ENCODE measurements at regions of chr20 and their contacts with region 1.

Region 1: GRCh38 chr20:38073307-38074071 is 39.9 kb downstream of the RPRD1B start:
- DNase-seq: peak; percentile 52
- H3K4me3 ChIP-seq: no peak overlapping the region; a peak in 1 of 4 replicates
- H3K27ac ChIP-seq: peak overlapping the region; percentile 36 to 78
- H3K4me1 ChIP-seq: peaks cover 10 to 22% of the 10 kb centered on the region in 2 experiments; a peak in 3 of 4 replicates
- H3K27me3 ChIP-seq: no peaks in the 10 kb centered on the region
- CTCF ChIP-seq: peak; percentile 81
- EP300 ChIP-seq: no peak
- RAD21 ChIP-seq: peak; percentile 70

Region 2: GRCh38 chr20:37822141-37822601 is 251.3 kb before region 1 on chr20:
- CTCF ChIA-PET with region 1: no interaction called
- POLR2A ChIA-PET with region 1: no interaction called
- DNase-seq: no peak
- H3K4me3 ChIP-seq: peak overlapping the region; percentile 6 to 12; a peak in 2 of 4 replicates
- H3K27ac ChIP-seq: peak overlapping the region; percentile 79 to 89
- H3K4me1 ChIP-seq: peaks cover 9 to 13% of the 10 kb centered on the region in 2 experiments; a peak in 3 of 4 replicates
- H3K27me3 ChIP-seq: no peaks in the 10 kb centered on the region
- CTCF ChIP-seq: no peak
- EP300 ChIP-seq: no peak; a peak in 1 of 4 replicates
- RAD21 ChIP-seq: no peak

Region 3: DNA sequence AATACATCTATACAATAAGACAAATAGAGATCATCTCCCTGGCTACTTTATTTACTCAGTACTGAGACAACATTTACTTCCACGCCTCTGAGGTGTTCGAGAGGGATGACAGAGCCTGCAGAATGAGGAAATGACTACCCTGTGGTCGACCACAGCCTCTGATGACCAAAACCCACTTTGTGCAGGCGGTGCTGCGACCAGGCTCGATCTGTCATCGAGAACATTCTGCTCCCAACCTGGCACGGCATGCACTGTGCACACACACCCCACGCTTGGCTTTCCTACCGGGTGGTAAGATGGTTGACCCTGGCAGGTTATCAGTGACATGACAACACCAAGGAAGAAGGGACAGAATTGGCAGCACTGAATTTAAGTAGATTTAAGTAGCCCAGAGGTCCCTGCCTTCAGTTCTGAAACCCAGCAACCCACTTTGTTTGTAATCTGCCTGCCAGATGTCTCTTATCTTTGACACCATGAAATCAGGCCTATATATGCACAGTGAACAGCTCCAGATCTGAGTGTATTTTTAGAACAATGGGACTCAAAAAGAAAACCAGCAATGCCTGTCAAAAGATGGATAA is 82.8 kb before region 1 on chr20:
- CTCF ChIA-PET with region 1: no interaction called
- POLR2A ChIA-PET with region 1: no interaction called
- DNase-seq: peak; percentile 67
- H3K4me3 ChIP-seq: no peak overlapping the region
- H3K27ac ChIP-seq: peak overlapping the region in 1 of 2 experiments; percentile 91; a peak in 2 of 4 replicates
- H3K4me1 ChIP-seq: peaks cover 4 to 72% of the 10 kb centered on the region in 2 experiments; a peak in 3 of 4 replicates
- H3K27me3 ChIP-seq: no peaks in the 10 kb centered on the region
- CTCF ChIP-seq: no peak
- EP300 ChIP-seq: peak in 1 of 2 experiments; percentile 92; a peak in 2 of 4 replicates
- RAD21 ChIP-seq: no peak

Region 4: GRCh38 chr20:38050686-38051085 is 22.8 kb before region 1 on chr20:
- CTCF ChIA-PET with region 1: interaction called, 12 read pairs
- POLR2A ChIA-PET with region 1: no interaction called
- DNase-seq: no peak
- H3K4me3 ChIP-seq: no peak overlapping the region
- H3K27ac ChIP-seq: peak overlapping the region; percentile 47 to 61; a peak in 3 of 4 replicates
- H3K4me1 ChIP-seq: peaks cover 0 to 13% of the 10 kb centered on the region in 2 experiments; a peak in 3 of 4 replicates
- H3K27me3 ChIP-seq: no peaks in the 10 kb centered on the region
- CTCF ChIP-seq: no peak
- EP300 ChIP-seq: no peak
- RAD21 ChIP-seq: no peak

Region 5: GRCh38 chr20:38113401-38114325 is 40.2 kb after region 1 on chr20:
- CTCF ChIA-PET with region 1: interaction called, 16 read pairs
- POLR2A ChIA-PET with region 1: no interaction called
- DNase-seq: no peak
- H3K4me3 ChIP-seq: no peak overlapping the region
- H3K27ac ChIP-seq: peak overlapping the region; percentile 58 to 65
- H3K4me1 ChIP-seq: peaks cover 38 to 42% of the 10 kb centered on the region in 2 experiments
- H3K27me3 ChIP-seq: no peaks in the 10 kb centered on the region
- CTCF ChIP-seq: peak; percentile 57
- EP300 ChIP-seq: no peak
- RAD21 ChIP-seq: peak; percentile 66

Region 6: DNA sequence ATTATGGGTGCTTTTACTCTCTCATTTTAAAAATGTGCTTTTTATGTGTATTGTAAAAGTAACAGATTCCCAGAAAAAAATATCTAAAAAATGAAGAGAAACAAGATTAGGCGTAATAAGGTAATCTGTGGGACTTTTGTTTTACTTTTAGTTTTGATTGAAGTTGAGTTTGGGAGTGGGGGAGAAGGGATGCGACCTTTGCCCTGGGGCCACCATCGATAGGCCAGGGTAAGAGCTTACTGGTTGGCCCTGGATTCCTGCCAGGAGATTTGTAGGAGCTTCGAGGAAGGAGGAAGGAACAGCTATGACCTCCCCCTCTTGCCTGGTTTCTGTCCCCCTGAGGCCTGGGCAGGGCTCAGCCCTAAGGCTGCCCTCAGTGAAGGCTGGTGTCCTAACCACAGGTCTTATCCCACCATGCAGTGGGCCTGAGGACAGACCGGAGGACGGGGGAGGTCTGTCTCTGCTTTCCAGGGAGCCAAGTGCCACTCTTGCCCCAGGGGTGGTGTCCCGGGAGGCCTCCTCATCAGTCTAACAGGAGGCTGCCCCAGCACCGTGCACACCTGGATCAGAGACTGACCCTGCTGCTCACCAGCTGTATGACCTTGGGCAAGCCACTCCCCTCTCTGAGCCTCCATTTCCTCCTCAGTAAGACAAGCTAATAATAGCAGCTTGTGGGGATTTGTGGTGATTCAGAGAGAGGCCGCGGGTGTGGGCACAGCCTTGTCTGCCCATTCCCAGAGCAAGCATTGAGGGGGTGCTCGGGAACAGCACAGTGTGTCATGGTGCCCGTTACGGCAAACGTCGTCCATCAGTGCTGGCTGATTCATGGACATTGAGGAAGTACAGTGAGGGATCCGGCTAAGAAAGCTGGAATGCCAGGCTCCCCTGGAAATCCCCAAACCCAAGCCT is 70.4 kb after region 1 on chr20:
- CTCF ChIA-PET with region 1: interaction called, 13 read pairs
- POLR2A ChIA-PET with region 1: interaction called, 4 read pairs
- DNase-seq: peak; percentile 46
- H3K4me3 ChIP-seq: no peak overlapping the region
- H3K27ac ChIP-seq: peak overlapping the region; percentile 66 to 98
- H3K4me1 ChIP-seq: peaks cover 18 to 43% of the 10 kb centered on the region in 2 experiments
- H3K27me3 ChIP-seq: no peaks in the 10 kb centered on the region
- CTCF ChIP-seq: no peak
- EP300 ChIP-seq: peak in 1 of 2 experiments; percentile 83; a peak in 2 of 4 replicates
- RAD21 ChIP-seq: no peak

Region 7: DNA sequence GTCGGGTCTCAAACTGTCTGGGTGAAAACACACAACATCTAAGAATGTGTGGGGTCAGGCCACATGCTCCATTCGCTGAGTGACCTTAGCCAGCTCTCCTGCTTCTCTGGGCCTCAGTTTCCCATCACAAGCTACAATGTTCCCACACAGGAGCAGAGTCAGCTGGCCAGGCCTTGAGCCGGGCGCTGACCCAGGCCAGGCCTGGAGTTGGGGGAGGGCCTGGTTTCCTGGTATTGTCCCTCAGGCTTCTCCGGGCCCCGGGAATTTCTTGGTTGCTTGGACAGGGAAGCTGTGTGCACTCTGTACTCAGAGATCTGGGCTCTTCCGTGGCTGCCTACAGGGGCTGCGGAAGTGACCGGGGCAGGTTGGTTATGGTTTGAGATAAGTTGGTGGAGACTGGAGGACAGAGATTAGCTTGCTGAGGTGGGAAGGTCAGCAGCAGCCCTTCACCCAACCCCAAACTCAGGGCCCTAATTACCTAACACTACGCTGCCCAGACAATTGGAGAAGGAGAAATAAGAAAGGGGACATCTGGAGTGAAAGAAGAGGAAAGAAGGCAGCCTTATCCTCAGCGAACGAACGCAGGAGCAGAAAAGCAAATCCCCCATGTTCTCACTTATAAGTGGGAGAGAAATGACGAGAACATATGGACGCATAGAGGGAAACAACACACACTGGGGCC is 85.3 kb after region 1 on chr20:
- CTCF ChIA-PET with region 1: interaction called, 21 read pairs
- POLR2A ChIA-PET with region 1: no interaction called
- DNase-seq: no peak
- H3K4me3 ChIP-seq: no peak overlapping the region
- H3K27ac ChIP-seq: no peak overlapping the region; a peak in 2 of 4 replicates
- H3K4me1 ChIP-seq: peaks cover 26 to 28% of the 10 kb centered on the region in 2 experiments; a peak in 2 of 4 replicates
- H3K27me3 ChIP-seq: no peaks in the 10 kb centered on the region
- CTCF ChIP-seq: no peak
- EP300 ChIP-seq: no peak
- RAD21 ChIP-seq: no peak

Region 8: DNA sequence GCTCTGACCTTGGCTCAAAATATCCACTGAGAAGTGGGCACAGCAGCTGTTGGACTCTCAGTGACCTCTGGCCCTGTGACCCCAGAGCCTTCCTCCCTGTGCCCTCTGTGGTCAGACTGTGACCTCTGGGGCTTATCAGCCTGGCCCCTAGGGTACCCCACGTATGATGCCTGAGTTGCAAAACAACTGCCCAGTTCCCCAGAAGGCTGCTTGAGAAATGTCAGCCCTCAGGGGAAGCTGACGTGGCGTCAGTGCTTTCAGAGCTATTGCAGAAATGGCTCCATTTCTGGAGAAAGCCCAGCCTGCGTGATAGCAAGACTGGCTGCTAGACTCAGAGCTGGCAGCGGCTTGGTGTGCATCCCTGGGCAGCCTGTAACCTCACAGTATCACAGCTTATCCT is 123.1 kb after region 1 on chr20:
- CTCF ChIA-PET with region 1: interaction called, 12 read pairs
- POLR2A ChIA-PET with region 1: no interaction called
- DNase-seq: no peak
- H3K4me3 ChIP-seq: no peak overlapping the region
- H3K27ac ChIP-seq: no peak overlapping the region
- H3K4me1 ChIP-seq: peaks cover 0 to 6% of the 10 kb centered on the region in 2 experiments; a peak in 1 of 4 replicates
- H3K27me3 ChIP-seq: no peaks in the 10 kb centered on the region
- CTCF ChIP-seq: no peak
- EP300 ChIP-seq: no peak
- RAD21 ChIP-seq: no peak

Region 9: GRCh38 chr20:38290832-38291581 is 217.5 kb after region 1 on chr20:
- CTCF ChIA-PET with region 1: no interaction called
- POLR2A ChIA-PET with region 1: no interaction called
- DNase-seq: peak; percentile 42
- H3K4me3 ChIP-seq: no peak overlapping the region
- H3K27ac ChIP-seq: no peak overlapping the region
- H3K4me1 ChIP-seq: no peaks in the 10 kb centered on the region
- H3K27me3 ChIP-seq: no peaks in the 10 kb centered on the region
- CTCF ChIP-seq: peak; percentile 44
- EP300 ChIP-seq: no peak
- RAD21 ChIP-seq: no peak; the same call in 1 of the 2 replicates